KBM-7 (cell line): ENCODE measurements at regions of chr10 and their contacts with region 1.

Region 1: DNA sequence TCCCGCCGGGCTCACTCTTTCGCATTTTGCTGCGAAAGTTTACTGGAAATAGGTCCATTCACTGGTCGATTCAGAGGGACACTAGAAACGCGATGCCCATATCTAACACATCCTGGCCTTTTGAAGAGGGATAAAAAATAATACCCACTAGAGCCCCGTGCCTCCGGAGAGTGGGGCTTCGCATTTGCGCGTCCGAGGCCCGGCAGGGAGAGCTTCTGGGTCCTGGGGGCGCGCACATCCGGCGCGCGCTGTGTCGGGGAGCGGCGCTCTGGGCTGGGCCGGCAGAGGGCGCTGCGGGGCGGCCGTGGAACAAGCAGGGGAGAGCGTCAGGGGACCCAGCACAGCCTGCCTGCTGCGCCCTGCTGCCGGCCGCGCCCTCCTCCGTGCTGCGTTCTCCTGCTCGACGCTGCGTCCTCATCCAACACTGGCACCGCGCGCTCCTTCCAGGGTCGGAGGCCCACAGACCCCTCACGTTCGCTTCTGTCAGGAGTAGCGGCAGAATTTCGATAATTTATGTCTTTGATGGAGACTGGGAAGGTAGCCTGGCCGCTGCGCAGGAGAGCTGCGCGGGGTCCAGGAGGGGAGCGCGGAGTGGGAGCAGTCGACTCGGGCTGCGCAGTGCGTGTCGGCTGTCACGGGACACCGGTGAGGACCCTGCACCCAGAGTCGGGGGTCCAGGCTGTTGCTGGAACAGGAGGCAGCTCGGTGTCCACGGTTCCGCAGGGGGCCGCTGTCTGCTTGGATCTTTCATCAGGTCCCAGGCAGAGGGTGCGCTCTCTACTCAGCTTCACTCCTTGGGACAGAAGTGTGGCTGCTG is 41.5 kb upstream of the ZNF32 start:
- DNase-seq: peak; percentile 79

Region 2: DNA sequence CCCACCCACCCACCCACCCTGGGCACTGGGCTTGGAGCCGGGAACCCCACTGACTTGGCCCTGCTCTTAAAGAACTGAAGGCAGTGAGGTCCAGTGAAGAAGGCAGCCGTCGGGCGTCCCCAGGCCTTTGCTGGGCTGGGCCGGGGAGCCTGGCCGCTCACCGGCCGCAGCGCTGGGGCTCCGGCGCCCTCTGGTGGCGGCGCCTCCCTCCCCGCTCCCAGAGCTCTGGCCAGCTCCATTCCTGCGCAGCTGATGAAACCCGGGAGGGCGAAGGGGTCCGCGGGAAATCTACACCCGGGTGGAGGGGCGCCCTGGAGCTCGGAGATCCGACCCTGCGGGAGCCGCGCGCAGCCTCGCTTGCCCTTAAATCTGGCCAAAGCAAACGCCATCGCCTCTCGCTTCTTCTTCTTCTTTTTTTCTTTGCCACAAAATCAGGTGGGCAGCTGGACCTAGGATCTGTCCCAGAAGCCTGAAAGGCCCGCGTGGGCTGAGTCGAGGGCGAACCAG is 696.4 kb after region 1 on chr10:
- in situ Hi-C with region 1: loop called (anchors 25 kb)
- DNase-seq: peak; percentile 47